ENCODE measurements at regions of chr1 and their contacts with region 1.

Region 1: GRCh38 chr1:112715264-112716053 is at the start of gene PPM1J:
- DNase-seq: no peak
- H3K4me3 ChIP-seq: peak within 1 kb of the TSS; percentile 61
- H3K27me3 ChIP-seq: no peaks in the 10 kb centered on the region; the same call in 1 of the 2 replicates
- CTCF ChIP-seq: no peak
- polyA plus RNA-seq, gene PPM1J: 0.67 and 1.4 TPM in 2 replicates

Region 2: GRCh38 chr1:112735752-112736151 is 20.3 kb after region 1 on chr1:
- CTCF ChIA-PET with region 1: interaction called, 160 read pairs
- POLR2A ChIA-PET with region 1: no interaction called
- DNase-seq: peak; percentile 43
- H3K4me3 ChIP-seq: no peak overlapping the region
- H3K27me3 ChIP-seq: no peaks in the 10 kb centered on the region
- CTCF ChIP-seq: no peak

Region 3: GRCh38 chr1:112754116-112754628 is 38.7 kb after region 1 on chr1:
- CTCF ChIA-PET with region 1: interaction called, 11 read pairs
- POLR2A ChIA-PET with region 1: no interaction called
- DNase-seq: no peak
- H3K4me3 ChIP-seq: no peak overlapping the region
- H3K27me3 ChIP-seq: no peaks in the 10 kb centered on the region; the same call in 1 of the 2 replicates
- CTCF ChIP-seq: no peak

Region 4: DNA sequence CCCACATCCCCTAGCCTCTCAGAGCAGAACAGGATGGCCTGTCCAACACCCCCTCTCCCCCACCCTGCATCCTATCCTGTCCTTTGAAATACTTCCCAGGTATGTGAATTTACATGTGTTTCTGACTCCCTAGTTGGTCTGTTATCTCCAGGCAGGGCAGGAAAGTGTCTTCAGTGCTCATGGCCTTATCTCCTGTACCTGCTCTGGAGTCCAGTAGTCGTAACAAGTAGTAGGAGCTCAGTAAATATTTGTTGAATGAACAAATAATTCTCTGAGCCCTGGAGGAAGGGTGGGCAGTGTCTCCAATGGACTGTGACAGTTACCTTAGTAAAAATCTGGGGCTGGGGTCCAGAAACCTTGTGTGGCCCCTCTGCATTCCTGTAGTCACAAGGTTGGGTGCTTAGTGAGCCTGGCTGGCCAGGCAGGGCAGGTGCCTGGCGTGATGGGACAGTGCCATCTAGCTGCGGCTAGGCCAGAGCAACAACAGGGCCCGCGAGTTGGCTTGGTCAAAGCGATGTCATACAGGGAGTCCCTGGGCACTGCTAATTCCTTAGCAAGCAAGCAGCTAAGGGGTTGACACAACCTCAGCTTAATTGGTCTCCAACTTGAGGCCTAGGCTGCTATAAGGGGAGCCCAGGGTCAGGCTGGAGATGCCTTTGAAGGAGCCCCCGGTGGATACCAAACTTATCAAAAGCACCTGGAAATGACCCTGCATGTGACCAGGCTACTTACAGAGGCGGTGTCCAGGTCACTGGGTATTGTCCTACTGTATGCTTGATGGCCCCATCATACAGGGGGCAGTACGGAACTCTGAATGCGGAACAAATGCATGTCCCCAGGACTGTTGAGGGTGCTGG is 88.7 kb after region 1 on chr1:
- CTCF ChIA-PET with region 1: interaction called, 486 read pairs
- POLR2A ChIA-PET with region 1: no interaction called
- DNase-seq: no peak
- H3K4me3 ChIP-seq: no peak overlapping the region
- H3K27me3 ChIP-seq: 0 out of 2 replicates have a peak, but pooled peaks cover 4% of the 10 kb centered on the region
- CTCF ChIP-seq: peak; percentile 92

Region 5: DNA sequence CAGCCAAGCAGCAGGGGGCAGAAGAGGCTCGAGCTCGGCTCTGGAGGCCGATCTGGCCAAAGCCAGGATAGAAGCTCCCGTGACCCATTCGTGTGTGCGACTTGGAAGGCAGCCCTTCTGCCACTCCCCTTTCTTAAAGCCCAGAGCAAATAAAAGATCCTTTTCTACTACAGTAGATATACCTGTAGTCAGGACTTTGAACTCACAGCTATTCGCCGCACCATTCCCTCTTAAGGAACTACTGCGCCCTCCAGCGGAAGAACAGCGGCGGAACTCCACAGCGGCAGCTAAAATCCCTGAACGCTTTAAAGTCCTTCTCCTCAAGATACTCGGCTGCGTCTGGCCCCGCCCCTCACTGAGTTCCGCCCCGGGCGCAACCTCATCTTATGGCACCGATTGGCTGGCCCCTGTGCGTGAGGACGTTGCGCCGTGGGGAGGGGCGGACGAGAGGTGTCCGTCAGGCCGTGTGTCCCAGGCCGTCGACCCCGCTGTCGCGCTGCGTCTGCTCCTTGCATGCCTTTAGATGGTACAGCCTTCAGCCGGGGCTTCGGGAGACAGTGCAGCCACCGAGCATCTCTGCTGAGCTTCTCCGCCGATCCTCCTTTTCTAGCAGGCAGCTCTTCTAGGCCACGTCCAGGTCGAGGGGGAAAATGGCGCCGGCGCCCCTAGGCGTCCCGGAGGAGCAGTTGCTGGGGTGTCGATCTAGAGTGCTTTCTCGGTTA is 357.5 kb after region 1 on chr1 and contains the start of gene LRIG2:
- CTCF ChIA-PET with region 1: interaction called, 25 read pairs
- POLR2A ChIA-PET with region 1: interaction called, 3 read pairs
- DNase-seq: peak; percentile 90
- H3K4me3 ChIP-seq: peak within 1 kb of the TSS; percentile 69
- H3K27me3 ChIP-seq: no peaks in the 10 kb centered on the region
- CTCF ChIP-seq: peak; percentile 92
- polyA plus RNA-seq, gene LRIG2: 5.3 and 7.1 TPM in 2 replicates

Measured in BJ (cell line).